Dorsolateral prefrontal cortex (tissue), 120 donors: ENCODE measurements at regions of chr22 and their contacts with region 1.

Region 1: GRCh38 chr22:46762238-46763050 is at the start of gene TBC1D22A:
- DNase-seq: peak; percentile 91 to 96 (median 94)
- H3K4me3 ChIP-seq: peak within 1 kb of the TSS; percentile 69 to 99 (median 93)
- H3K27ac ChIP-seq: peak within 1 kb of the TSS; percentile 47 to 96 (median 88)
- H3K27me3 ChIP-seq: no peaks in the 10 kb centered on the region
- CTCF ChIP-seq: peak in 36 of 56 donors; percentile 10 to 60 (median 30)
- total RNA-seq, gene TBC1D22A: 20.0 to 36.0 (median 27.2) TPM

Region 2: DNA sequence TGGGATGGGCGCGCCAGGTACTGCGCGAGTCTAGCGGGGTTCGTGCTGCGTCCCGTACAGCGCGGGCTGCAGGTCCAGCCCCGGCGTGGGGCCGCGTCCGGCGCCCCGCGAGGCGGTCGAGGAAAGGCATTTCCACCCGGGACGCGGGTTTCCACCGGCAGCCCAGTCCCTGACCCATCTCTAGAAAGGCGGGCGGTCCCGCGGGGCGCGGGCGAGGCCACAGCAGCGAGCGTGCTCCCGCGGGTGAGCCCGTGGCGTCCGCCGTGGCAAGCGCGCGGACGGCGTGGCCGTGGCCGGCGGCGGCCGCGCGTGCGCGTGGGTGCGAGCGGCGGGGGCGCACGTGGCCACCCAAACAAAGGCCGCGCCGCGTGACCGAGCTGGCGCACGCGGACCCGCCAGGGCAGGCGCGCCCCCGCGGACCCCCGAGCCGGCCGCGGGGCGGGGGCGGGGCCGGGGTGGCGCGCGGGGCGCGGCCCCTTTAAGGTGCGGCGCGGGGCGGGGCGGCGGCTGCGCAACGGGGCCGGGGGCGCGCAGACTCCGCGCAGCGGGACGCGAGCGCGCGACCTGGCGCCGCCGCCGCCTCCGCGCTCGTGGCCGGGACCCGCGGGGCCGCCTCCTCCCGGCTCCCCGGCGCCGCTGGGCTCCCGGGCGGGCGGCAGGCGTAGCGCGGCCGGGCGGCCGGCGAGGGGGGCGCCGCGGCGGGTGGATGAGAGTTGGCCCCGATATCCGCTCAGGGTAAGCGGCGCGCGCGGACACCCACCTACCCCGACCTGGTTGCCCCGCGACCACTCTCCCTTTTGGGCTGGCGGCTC is 185.7 kb before region 1 on chr22:
- intact Hi-C with region 1: loop called in 1 of 2 experiments (anchors 1 kb)
- DNase-seq: peak in 4 of 10 donors; percentile 40 to 59 (median 57)
- H3K4me3 ChIP-seq: peak overlapping the region; percentile 8 to 83 (median 73)
- H3K27ac ChIP-seq: peak overlapping the region in 45 of 59 donors; percentile 10 to 87 (median 72)
- H3K27me3 ChIP-seq: no peaks in the 10 kb centered on the region
- CTCF ChIP-seq: no peak

Region 3: GRCh38 chr22:46798366-46799350 is 36.2 kb after region 1 on chr22:
- intact Hi-C with region 1: loop called in 1 of 2 experiments (anchors 5 kb)
- DNase-seq: peak; percentile 69 to 87 (median 79)
- H3K4me3 ChIP-seq: no peak overlapping the region
- H3K27ac ChIP-seq: peak overlapping the region in 36 of 59 donors; percentile 7 to 67 (median 36)
- H3K27me3 ChIP-seq: no peaks in the 10 kb centered on the region
- CTCF ChIP-seq: peak; percentile 52 to 98 (median 93)